Heart right ventricle (tissue), 16 donors: ENCODE measurements at regions of chr15 and their contacts with region 1.

Region 1: GRCh38 chr15:29870495-29871151 is 48.4 kb upstream of the TJP1 start:
- DNase-seq: peak; percentile 44 to 61
- ATAC-seq: peak; percentile 64 to 86 (median 80)
- H3K4me3 ChIP-seq: peak overlapping the region in 3 of 10 donors; percentile 23 to 32 (median 26)
- H3K27ac ChIP-seq: peak overlapping the region; percentile 55 to 91 (median 76)
- H3K4me1 ChIP-seq: peaks cover 6 to 67% (median 30%) of the 10 kb centered on the region in 9 donors
- H3K27me3 ChIP-seq: no peaks in the 10 kb centered on the region
- CTCF ChIP-seq: no peak

Region 2: DNA sequence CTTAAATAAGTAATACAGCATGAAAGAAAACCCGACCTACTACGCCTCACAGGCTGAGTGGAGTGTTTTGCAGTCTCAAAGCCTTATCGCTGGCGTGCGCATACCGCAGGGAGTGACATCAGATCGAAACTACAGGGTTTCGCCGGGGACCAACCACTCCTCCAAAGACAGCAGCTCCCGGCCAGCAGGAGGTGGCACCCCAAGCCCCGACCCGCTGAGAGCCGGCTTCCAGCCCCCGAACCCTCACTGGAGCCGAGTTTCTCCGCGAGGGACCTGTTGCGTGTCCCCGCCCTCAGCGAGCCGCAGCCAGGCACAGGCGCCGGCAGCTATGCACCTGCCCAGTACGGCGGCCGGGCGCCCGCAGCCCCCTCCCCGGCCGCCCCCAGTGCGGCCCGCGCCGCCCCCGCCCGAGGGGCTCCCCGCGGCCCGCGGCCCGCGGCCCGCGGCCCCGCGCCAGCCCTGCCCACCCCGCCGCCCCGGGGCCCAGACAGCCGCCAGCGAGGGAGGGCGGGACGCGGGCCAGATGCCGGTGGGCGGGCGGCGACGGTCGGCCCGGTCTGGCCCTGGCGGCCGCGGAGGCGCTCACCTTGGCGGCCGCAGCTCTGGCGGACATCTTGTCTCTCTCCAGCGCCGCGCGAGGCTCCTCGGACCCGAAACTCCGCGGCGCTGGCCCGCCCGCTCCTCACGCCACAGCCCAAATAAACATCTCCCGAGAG is 49.0 kb before region 1 on chr15:
- intact Hi-C with region 1: loop called in 7 of 10 experiments (anchors 2 to 10 kb)
- DNase-seq: peak; percentile 69 to 83
- ATAC-seq: peak; percentile 39 to 86 (median 72)
- H3K4me3 ChIP-seq: peak overlapping the region; percentile 56 to 91 (median 76)
- H3K27ac ChIP-seq: peak overlapping the region; percentile 92 to 99 (median 98)
- H3K4me1 ChIP-seq: peaks cover 4 to 63% (median 28%) of the 10 kb centered on the region in 9 donors
- H3K27me3 ChIP-seq: peaks cover 0 to 73% (median 0%) of the 10 kb centered on the region in 7 donors
- CTCF ChIP-seq: peak in 8 of 9 donors; percentile 9 to 54 (median 28)

Region 3: GRCh38 chr15:29835301-29835700 is 35.3 kb before region 1 on chr15:
- intact Hi-C with region 1: loop called in 1 of 10 experiments (anchors 2 kb)
- DNase-seq: peak in 1 of 2 donors; percentile 58
- ATAC-seq: peak; percentile 76 to 92 (median 88)
- H3K4me3 ChIP-seq: no peak overlapping the region
- H3K27ac ChIP-seq: peak overlapping the region; percentile 4 to 79 (median 68)
- H3K4me1 ChIP-seq: peaks cover 2 to 53% (median 33%) of the 10 kb centered on the region in 9 donors
- H3K27me3 ChIP-seq: peaks cover 0 to 6% (median 0%) of the 10 kb centered on the region in 7 donors
- CTCF ChIP-seq: no peak

Region 4: GRCh38 chr15:29913528-29914135 is 43.0 kb after region 1 on chr15:
- intact Hi-C with region 1: loop called in 1 of 10 experiments (anchors 5 kb)
- DNase-seq: no peak
- ATAC-seq: peak; percentile 36 to 76 (median 68)
- H3K4me3 ChIP-seq: no peak overlapping the region
- H3K27ac ChIP-seq: peak overlapping the region; percentile 4 to 86 (median 68)
- H3K4me1 ChIP-seq: peaks cover 5 to 62% (median 34%) of the 10 kb centered on the region in 9 donors
- H3K27me3 ChIP-seq: no peaks in the 10 kb centered on the region
- CTCF ChIP-seq: no peak

Region 5: DNA sequence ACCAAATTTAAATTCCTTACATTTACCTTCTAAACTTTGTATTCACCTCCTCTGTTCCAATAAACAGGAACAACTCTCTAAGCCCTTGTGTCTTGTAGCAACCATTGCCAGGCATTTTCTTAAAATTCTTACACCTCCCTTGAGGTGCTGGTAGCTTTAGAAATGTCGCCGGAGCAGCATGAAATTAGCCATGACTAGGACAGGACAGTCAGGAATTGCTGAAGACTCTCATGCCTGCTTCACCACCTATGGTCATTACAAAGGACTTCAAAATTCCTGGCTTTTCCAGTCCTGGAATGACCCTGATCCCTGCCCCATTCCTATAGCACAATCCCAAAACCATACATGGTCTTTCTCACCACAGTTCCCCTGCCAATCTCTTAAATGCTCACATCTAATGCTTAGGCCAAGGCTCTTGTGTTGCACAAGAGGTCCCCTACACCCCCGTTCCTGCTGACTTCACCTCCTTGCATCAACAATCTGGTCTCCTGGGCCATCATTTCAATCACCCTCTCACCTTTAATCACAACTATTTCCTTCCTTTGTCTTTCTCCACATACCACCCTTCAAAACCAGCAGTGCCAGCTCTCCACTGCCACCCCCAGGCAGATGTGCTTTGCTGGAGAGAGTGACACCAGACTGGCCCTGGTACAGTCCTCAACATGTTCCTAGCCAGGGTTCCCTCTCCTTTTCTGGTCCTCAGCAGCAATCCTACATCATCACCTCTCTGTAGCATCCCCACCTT is 64.8 kb after region 1 on chr15:
- intact Hi-C with region 1: no loop called
- DNase-seq: no peak
- ATAC-seq: peak in 6 of 8 donors; percentile 53 to 80 (median 61)
- H3K4me3 ChIP-seq: no peak overlapping the region
- H3K27ac ChIP-seq: no peak overlapping the region
- H3K4me1 ChIP-seq: peaks cover 0 to 3% (median 0%) of the 10 kb centered on the region in 9 donors
- H3K27me3 ChIP-seq: no peaks in the 10 kb centered on the region
- CTCF ChIP-seq: peak in 6 of 9 donors; percentile 19 to 56 (median 40)

Region 6: GRCh38 chr15:29978411-29979382 is 108.1 kb after region 1 on chr15:
- intact Hi-C with region 1: no loop called
- DNase-seq: no peak
- ATAC-seq: peak in 1 of 8 donors; percentile 60
- H3K4me3 ChIP-seq: no peak overlapping the region
- H3K27ac ChIP-seq: no peak overlapping the region
- H3K4me1 ChIP-seq: no peaks in the 10 kb centered on the region
- H3K27me3 ChIP-seq: peaks cover 0 to 5% (median 0%) of the 10 kb centered on the region in 7 donors
- CTCF ChIP-seq: no peak